ENCODE measurements at regions of chr4 and their contacts with region 1.

Region 1: GRCh38 chr4:40840985-40841571 is 91.3 kb downstream of the NSUN7 start:
- DNase-seq: peak; percentile 75 to 81 (median 79)
- H3K4me3 ChIP-seq: no peak overlapping the region
- H3K4me3 Mint-ChIP-seq: no peak overlapping the region
- H3K27ac ChIP-seq: no peak overlapping the region
- H3K27ac Mint-ChIP-seq: peak overlapping the region in 4 of 7 donors; percentile 15 to 41 (median 32)
- H3K4me1 ChIP-seq: peaks cover 10 to 14% of the 10 kb centered on the region in 2 donors
- H3K4me1 Mint-ChIP-seq: peaks cover 14% of the 10 kb centered on the region
- H3K27me3 ChIP-seq: no peaks in the 10 kb centered on the region
- H3K27me3 Mint-ChIP-seq: no peaks in the 10 kb centered on the region
- CTCF ChIP-seq: peak; percentile 81

Region 2: DNA sequence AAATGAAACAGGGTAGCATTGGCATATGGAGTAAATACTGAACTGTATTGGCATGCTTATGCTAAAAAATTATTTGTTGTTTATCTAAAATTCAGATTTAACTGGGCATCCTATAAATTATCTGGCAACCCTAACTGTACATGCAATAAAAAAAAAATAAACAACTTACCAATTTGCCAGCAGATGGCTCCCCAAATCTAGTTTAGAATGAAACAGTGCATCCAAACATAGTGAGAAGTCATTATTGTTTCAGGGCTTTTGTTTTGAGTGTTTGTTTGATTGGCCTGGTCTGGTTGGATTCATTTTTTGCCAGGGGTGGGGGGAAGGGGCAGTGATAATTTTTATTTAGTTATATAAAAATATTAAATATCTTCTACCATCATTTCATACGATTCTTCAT is 104.2 kb before region 1 on chr4:
- intact Hi-C with region 1: loop called in 1 of 2 experiments (anchors 10 kb)
- DNase-seq: peak in 2 of 3 donors; percentile 36 to 49
- H3K4me3 ChIP-seq: no peak overlapping the region
- H3K4me3 Mint-ChIP-seq: no peak overlapping the region
- H3K27ac ChIP-seq: no peak overlapping the region
- H3K27ac Mint-ChIP-seq: no peak overlapping the region
- H3K4me1 ChIP-seq: peaks cover 32 to 34% of the 10 kb centered on the region in 2 donors
- H3K4me1 Mint-ChIP-seq: peaks cover 31% of the 10 kb centered on the region
- H3K27me3 ChIP-seq: no peaks in the 10 kb centered on the region
- H3K27me3 Mint-ChIP-seq: peaks cover 0 to 9% (median 0%) of the 10 kb centered on the region in 3 donors
- CTCF ChIP-seq: peak; percentile 58

Region 3: GRCh38 chr4:40788331-40788730 is 52.7 kb before region 1 on chr4:
- intact Hi-C with region 1: loop called in 1 of 2 experiments (anchors 10 kb)
- DNase-seq: no peak
- H3K4me3 ChIP-seq: peak overlapping the region in 1 of 3 experiments; percentile 3
- H3K4me3 Mint-ChIP-seq: no peak overlapping the region
- H3K27ac ChIP-seq: no peak overlapping the region
- H3K27ac Mint-ChIP-seq: no peak overlapping the region
- H3K4me1 ChIP-seq: peaks cover 11% of the 10 kb centered on the region in 2 donors
- H3K4me1 Mint-ChIP-seq: peaks cover 16% of the 10 kb centered on the region
- H3K27me3 ChIP-seq: no peaks in the 10 kb centered on the region
- H3K27me3 Mint-ChIP-seq: peaks cover 2 to 3% (median 2%) of the 10 kb centered on the region in 3 donors
- CTCF ChIP-seq: no peak

Region 4: DNA sequence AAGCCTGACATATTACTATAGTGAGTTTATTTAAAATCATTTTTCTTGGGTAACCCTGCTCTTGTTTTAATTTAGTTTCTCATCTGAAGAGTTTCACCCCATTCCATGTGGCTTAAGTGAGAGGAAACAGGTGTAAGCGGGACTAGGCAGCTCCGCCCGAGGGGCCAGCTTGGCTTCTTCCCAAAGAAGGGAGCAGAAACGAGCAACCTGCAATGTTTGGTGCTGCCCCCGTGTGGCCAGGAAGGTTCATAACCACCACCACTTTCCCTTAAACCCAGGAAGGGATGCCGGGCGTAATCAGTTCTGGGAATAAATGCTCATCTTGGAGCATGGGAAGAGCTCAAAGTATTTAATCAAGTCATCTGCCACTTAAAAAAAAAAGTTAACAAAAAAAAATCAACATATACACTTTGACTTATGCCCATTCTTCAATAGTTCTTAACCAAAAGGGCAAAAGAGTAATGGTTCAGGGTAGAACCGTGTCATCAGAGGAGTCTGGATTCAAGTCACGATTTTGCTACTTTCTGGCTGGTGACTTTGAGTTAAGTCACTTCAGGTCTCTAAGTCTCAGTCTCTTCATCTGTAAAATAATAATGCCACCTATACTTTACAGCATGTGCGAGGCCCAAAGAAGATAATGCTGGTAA is 56.6 kb after region 1 on chr4:
- intact Hi-C with region 1: loop called in 1 of 2 experiments (anchors 2 kb)
- DNase-seq: peak; percentile 44 to 62 (median 62)
- H3K4me3 ChIP-seq: peak overlapping the region in 1 of 3 experiments; percentile 47
- H3K4me3 Mint-ChIP-seq: peak overlapping the region; percentile 56 to 83
- H3K27ac ChIP-seq: no peak overlapping the region
- H3K27ac Mint-ChIP-seq: peak overlapping the region in 3 of 7 donors; percentile 42 to 93 (median 84)
- H3K4me1 ChIP-seq: peaks cover 4 to 6% of the 10 kb centered on the region in 2 donors
- H3K4me1 Mint-ChIP-seq: peaks cover 4% of the 10 kb centered on the region
- H3K27me3 ChIP-seq: no peaks in the 10 kb centered on the region
- H3K27me3 Mint-ChIP-seq: peaks cover 0 to 1% (median 0%) of the 10 kb centered on the region in 3 donors
- CTCF ChIP-seq: peak; percentile 95

Measured in CD14-positive monocyte (primary cell).